Right ventricle myocardium inferior (tissue), 1 donor: ENCODE measurements at regions of chr11 and their contacts with region 1.

Region 1: GRCh38 chr11:2885676-2886081 is at the start of gene CDKN1C:
- DNase-seq: peak; percentile 94
- ATAC-seq: peak; percentile 83
- total RNA-seq, gene CDKN1C: 40.0 TPM

Region 2: DNA sequence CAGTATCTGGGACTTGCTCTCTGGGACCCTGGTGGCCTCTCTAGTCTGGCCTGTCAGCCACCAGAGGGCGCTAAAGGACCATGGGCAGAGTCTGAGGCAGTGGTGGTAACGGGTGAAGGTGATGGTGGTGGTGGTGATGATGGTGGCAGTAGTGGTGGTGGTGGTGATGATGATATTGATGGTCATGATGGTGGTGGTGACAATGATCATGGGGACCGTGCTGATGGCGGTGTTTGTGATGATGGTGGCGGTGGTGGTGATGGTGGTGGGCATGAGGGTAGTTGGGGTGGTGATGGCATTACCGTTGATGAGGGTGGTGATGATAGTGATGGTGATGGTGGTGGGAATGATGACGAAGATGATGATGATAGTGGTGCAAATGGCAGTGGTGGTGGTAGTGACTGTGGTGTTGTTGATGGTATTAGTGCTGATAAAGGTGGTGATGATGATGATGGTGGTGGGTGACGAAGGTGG is 457.3 kb before region 1 on chr11:
- intact Hi-C with region 1: loop called (anchors 1 kb)
- DNase-seq: peak; percentile 92
- ATAC-seq: peak; percentile 73

Region 3: DNA sequence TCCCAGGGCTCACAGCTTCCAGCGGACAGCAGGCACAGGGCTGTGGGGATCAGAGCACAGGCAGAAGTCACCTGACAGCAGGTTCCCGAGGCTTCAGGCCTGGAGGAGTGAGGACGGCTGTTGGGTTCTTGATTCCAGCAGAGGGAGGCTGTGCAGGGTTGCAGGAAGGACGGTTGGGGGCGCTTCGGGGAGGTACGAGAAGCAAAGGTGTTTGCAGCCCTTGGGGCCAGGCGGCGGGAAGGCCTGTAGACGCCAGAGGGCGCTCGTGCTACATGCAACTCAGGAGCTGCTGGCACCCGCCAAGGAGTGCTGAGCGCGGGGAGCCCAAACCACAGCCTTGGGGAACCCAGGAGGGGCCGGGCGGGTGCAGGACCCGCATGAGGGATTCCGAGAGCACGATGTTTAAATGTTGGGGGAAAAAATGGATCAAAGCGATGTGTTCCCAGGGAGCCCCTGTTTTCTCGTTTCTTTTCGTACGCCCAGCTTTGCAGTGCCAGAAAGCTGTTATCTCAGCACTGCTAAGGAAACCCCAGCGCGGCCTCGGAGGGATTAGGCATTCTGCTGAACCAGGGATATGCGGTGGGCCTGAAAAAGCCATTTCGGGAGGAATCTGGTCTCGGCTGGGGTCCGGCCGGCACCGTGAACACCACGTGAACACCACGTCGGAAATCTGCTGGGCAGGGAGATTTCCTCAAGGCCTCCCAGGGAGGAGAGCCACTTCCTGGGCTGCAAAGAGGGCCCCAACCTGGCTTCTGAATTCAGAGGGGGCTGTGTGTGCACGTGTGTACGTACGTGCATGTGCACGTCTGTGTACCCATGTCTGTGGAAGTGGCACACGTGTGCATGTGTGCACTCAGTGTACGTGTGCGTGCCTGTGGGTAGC is 352.7 kb before region 1 on chr11:
- intact Hi-C with region 1: loop called (anchors 1 kb)
- DNase-seq: peak; percentile 96
- ATAC-seq: peak; percentile 85

Region 4: DNA sequence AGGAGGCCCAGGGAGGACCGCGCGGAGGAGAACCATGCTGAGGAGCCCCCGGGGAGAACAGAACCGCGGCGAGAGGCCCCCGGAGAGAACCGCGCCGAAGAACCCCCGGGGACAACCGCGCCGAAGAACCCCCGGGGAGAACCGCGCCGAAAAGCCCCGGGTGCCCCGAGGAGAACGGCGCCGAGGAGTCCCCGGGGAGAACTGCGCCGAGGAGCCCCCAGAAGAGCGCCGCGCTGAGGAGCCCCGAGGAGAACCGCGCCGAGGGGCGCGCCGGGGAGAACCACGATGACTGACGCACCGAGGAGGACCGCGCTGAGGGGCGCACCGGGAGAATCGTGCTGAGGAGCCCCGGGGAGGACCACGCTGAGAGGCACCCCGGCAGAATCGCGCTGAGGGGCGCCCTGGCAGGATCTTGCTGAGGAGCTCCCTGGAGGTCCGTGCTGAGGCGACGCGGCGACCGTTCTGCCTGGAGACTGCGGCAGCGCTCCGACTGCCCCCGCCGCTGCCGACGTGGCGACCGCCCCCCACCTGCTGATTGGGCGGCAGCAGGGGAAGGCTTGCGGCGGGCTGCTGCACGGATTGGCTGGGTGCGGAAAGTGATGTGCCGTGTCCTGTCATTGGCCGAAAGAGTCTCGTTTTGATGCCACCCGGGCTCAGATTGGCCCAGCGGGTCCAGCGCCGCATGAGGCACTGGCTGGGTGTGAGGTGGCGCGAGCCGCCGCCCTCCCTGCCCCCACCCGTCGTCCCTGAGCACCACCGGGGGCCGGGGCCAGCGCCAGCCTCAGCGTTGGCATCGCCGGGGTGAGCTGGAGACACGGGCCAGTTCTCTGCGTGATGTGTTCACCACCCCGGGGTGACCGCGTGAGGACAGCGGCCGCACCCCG is 185.9 kb before region 1 on chr11 and contains the start of gene KCNQ1OT1:
- intact Hi-C with region 1: loop called (anchors 5 kb)
- DNase-seq: peak; percentile 93
- ATAC-seq: peak; percentile 97
- total RNA-seq, gene KCNQ1OT1: 0.32 TPM

Region 5: GRCh38 chr11:2812371-2812991 is 73.2 kb before region 1 on chr11:
- intact Hi-C with region 1: loop called (anchors 5 kb)
- DNase-seq: peak; percentile 88
- ATAC-seq: peak; percentile 77

Region 6: GRCh38 chr11:2825889-2826678 is 59.6 kb before region 1 on chr11:
- intact Hi-C with region 1: loop called (anchors 2 kb)
- DNase-seq: peak; percentile 81
- ATAC-seq: peak; percentile 83